Heart left ventricle (tissue), 16 donors: ENCODE measurements at regions of chr22 and their contacts with region 1.

Region 1: GRCh38 chr22:50469377-50470305 is 5.2 kb downstream of the SBF1 start:
- DNase-seq: peak in 2 of 5 donors; percentile 58 to 88
- ATAC-seq: peak in 2 of 4 donors; percentile 8 to 9
- H3K4me3 ChIP-seq: peak overlapping the region in 1 of 12 donors; percentile 36
- H3K27ac ChIP-seq: peak overlapping the region in 1 of 12 donors; percentile 81
- H3K4me1 ChIP-seq: peaks cover 0 to 63% (median 50%) of the 10 kb centered on the region in 12 donors
- H3K27me3 ChIP-seq: no peaks in the 10 kb centered on the region
- CTCF ChIP-seq: no peak
- POLR2A ChIP-seq: no peak

Region 2: DNA sequence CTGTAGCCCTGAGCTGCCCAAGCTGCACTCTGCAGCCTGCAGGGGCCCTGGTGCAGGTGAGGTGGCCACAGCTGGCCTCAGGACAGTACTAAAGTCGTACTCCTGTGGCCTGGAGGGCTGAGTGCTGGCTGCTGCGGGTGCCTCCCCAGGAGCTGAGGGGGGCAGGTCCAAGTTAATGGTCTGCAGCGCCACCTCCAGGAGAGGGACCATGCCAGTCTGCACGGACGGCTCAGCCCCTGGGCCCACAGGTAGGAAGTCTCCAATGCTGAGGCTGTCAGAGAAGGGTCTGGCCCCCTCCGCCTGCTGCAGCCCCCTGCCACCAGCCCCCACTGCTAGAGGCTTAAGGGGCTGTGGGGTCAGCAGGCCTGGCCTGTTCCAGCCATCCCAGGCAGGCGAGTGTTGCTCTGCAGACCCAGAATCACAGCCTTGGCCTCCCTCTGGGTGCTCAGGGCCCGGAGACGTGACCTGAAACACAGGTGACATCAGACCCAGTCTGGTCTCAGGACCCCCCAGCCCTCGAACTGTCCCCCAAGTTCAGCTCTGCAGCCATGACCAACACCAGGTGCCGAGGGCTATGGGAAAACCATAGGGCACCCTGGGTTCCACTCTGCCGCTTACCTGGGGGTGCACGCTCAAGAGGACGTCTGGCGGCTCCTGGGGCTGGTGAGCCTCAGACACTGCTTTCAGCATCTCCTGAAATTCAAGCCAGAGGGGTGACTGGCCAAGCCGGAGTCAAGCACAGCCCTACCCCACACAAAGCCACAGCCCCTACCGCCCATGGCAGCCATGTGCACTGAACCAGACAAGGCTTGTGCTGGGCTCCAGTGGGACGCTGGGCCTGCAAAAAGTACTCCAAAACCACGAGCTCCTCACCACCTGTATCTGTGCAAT is 248.0 kb before region 1 on chr22:
- intact Hi-C with region 1: loop called in 1 of 10 experiments (anchors 10 kb)
- DNase-seq: no peak
- ATAC-seq: no peak
- H3K4me3 ChIP-seq: no peak overlapping the region
- H3K27ac ChIP-seq: no peak overlapping the region
- H3K4me1 ChIP-seq: peaks cover 0 to 10% (median 4%) of the 10 kb centered on the region in 12 donors
- H3K27me3 ChIP-seq: no peaks in the 10 kb centered on the region
- CTCF ChIP-seq: no peak
- POLR2A ChIP-seq: no peak